Right ventricle myocardium superior (tissue), 1 donor: ENCODE measurements at regions of chr6 and their contacts with region 1.

Region 1: GRCh38 chr6:55069132-55069781 is 105.1 kb upstream of the HCRTR2 start:
- DNase-seq: no peak
- ATAC-seq: peak; percentile 59

Region 2: GRCh38 chr6:54717849-54718455 is 351.3 kb before region 1 on chr6:
- intact Hi-C with region 1: loop called (anchors 10 kb)
- DNase-seq: no peak
- ATAC-seq: peak; percentile 79